ENCODE measurements at regions of chr5 and their contacts with region 1.

Region 1: DNA sequence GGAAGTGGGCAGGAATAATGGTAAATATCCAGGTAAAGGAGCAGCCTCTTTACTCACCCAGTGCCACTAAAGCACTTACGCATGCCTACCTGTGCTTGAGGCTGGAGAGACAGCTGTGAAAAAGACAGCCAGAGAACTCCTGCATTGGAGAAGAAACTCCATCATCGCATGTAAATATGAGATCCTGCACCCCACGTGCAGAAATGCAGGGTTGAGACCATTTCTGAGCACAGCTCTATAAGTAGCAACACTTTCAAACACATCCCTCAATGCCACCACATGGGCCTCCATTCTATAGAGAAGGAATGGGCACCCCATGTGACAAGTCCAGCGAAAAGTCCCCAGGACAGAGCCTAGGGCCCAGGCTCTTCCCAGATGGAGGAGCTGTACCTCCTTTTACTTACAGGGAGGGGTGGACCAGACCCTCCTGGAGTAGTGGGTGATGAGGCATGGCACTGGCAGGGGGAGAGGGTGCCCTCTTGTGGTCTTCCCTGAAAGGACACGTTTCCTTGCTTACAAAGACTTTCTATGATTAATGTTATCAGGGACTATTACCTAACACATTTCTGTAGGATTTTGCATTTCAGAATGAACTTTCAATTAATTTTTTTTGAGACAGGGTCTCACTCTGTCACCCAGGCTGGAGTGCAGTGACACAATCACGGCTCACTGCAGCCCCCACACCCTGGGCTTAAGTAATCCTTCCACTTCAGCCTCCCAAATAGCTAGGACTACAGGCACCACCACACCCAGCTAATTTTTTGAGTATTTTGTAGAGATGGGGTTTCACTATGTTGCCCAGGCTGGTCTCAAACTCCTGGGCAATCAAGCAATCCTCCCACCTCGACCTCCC is 55.3 kb upstream of the IL17B start:
- DNase-seq: peak in 8 of 9 experiments; percentile 17 to 66 (median 50)
- ATAC-seq: no peak
- H3K4me3 ChIP-seq: no peak overlapping the region
- H3K4me3 Mint-ChIP-seq: no peak overlapping the region
- H3K27ac ChIP-seq: no peak overlapping the region
- H3K27ac Mint-ChIP-seq: no peak overlapping the region
- H3K4me1 ChIP-seq: peaks cover 5% of the 10 kb centered on the region
- H3K4me1 Mint-ChIP-seq: peaks cover 7% of the 10 kb centered on the region
- H3K27me3 ChIP-seq: no peaks in the 10 kb centered on the region
- H3K27me3 Mint-ChIP-seq: peaks cover 2% of the 10 kb centered on the region
- CTCF ChIP-seq: peak; percentile 74

Region 2: DNA sequence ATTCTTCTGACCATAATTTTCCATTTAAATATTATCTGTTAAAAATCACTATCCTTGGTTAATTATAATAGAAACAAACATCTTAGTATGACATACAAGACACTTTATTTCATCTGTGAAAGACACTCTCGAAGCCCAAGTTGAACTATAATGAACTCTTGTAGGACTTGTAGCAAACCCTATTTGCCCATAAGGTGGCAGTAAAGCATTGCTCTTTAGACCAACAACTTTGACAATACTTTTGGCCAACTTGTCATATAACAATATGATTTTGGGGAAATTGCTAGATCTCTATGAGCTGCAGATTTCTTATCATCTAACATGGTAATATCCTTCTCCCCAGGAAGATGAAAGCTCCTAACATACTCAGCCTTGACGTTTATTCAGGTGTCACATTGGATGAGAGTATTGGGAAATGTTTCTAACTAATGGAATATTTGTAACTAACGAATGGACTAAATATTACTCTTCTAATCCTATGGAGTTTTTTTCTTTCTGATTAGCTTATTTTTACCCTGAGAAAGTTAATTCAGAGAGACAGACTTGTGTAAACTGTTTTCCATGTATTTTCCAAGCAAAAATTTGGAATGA is 1255.1 kb before region 1 on chr5:
- CTCF ChIA-PET with region 1: no interaction called
- POLR2A ChIA-PET with region 1: no interaction called
- intact Hi-C with region 1: loop called in 1 of 2 experiments (anchors 10 kb)
- DNase-seq: peak in 3 of 9 experiments; percentile 5 to 64 (median 51)
- ATAC-seq: no peak
- H3K4me3 ChIP-seq: no peak overlapping the region
- H3K4me3 Mint-ChIP-seq: no peak overlapping the region
- H3K27ac ChIP-seq: no peak overlapping the region
- H3K27ac Mint-ChIP-seq: no peak overlapping the region
- H3K4me1 ChIP-seq: no peaks in the 10 kb centered on the region
- H3K4me1 Mint-ChIP-seq: no peaks in the 10 kb centered on the region
- H3K27me3 ChIP-seq: no peaks in the 10 kb centered on the region
- H3K27me3 Mint-ChIP-seq: peaks cover 12% of the 10 kb centered on the region
- CTCF ChIP-seq: peak; percentile 62

Region 3: GRCh38 chr5:149317281-149318048 is 116.9 kb before region 1 on chr5:
- CTCF ChIA-PET with region 1: interaction called, 61 read pairs
- POLR2A ChIA-PET with region 1: no interaction called
- intact Hi-C with region 1: loop called in 1 of 2 experiments (anchors 1 kb)
- DNase-seq: peak in 7 of 9 experiments; percentile 14 to 71 (median 38)
- ATAC-seq: peak; percentile 69
- H3K4me3 ChIP-seq: no peak overlapping the region
- H3K4me3 Mint-ChIP-seq: no peak overlapping the region
- H3K27ac ChIP-seq: no peak overlapping the region
- H3K27ac Mint-ChIP-seq: no peak overlapping the region
- H3K4me1 ChIP-seq: no peaks in the 10 kb centered on the region
- H3K4me1 Mint-ChIP-seq: peaks cover 3% of the 10 kb centered on the region
- H3K27me3 ChIP-seq: no peaks in the 10 kb centered on the region
- H3K27me3 Mint-ChIP-seq: no peaks in the 10 kb centered on the region
- CTCF ChIP-seq: peak; percentile 90

Region 4: DNA sequence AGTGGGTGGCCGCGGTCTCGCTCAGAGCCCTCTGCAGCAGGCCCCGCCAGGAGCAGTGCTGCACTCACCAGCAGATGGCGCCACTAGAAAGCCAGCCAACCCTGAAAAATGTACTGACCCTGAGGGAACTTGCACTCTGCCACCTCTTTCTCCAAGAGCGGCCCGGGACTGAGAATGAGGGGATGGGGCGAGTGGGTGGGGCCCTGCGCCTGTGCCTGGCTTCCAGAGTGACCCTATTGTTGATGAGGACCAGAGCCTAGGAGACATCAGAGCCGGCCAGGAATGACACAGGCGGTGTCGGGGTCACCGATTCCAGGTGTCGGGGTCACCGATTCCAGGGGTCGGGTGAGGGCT is 52.4 kb before region 1 on chr5:
- CTCF ChIA-PET with region 1: interaction called, 7 read pairs
- POLR2A ChIA-PET with region 1: no interaction called
- intact Hi-C with region 1: loop called in 1 of 2 experiments (anchors 5 kb)
- DNase-seq: peak; percentile 45 to 82 (median 71)
- ATAC-seq: peak; percentile 61
- H3K4me3 ChIP-seq: no peak overlapping the region
- H3K4me3 Mint-ChIP-seq: no peak overlapping the region
- H3K27ac ChIP-seq: no peak overlapping the region
- H3K27ac Mint-ChIP-seq: no peak overlapping the region
- H3K4me1 ChIP-seq: peaks cover 3% of the 10 kb centered on the region
- H3K4me1 Mint-ChIP-seq: peaks cover 4% of the 10 kb centered on the region
- H3K27me3 ChIP-seq: peaks cover 0 to 2% of the 10 kb centered on the region in 2 experiments
- H3K27me3 Mint-ChIP-seq: peaks cover 2% of the 10 kb centered on the region
- CTCF ChIP-seq: peak; percentile 77

Region 5: GRCh38 chr5:149489605-149490037 is 55.2 kb after region 1 on chr5:
- CTCF ChIA-PET with region 1: no interaction called
- POLR2A ChIA-PET with region 1: no interaction called
- intact Hi-C with region 1: no loop called
- DNase-seq: no peak
- ATAC-seq: no peak
- H3K4me3 ChIP-seq: no peak overlapping the region
- H3K4me3 Mint-ChIP-seq: no peak overlapping the region
- H3K27ac ChIP-seq: no peak overlapping the region
- H3K27ac Mint-ChIP-seq: no peak overlapping the region
- H3K4me1 ChIP-seq: no peaks in the 10 kb centered on the region
- H3K4me1 Mint-ChIP-seq: peaks cover 9% of the 10 kb centered on the region
- H3K27me3 ChIP-seq: no peaks in the 10 kb centered on the region
- H3K27me3 Mint-ChIP-seq: no peaks in the 10 kb centered on the region
- CTCF ChIP-seq: no peak

Region 6: GRCh38 chr5:149544028-149544420 is 109.6 kb after region 1 on chr5:
- CTCF ChIA-PET with region 1: interaction called, 14 read pairs
- POLR2A ChIA-PET with region 1: no interaction called
- intact Hi-C with region 1: no loop called
- DNase-seq: no peak
- ATAC-seq: no peak
- H3K4me3 ChIP-seq: no peak overlapping the region
- H3K4me3 Mint-ChIP-seq: no peak overlapping the region
- H3K27ac ChIP-seq: no peak overlapping the region
- H3K27ac Mint-ChIP-seq: no peak overlapping the region
- H3K4me1 ChIP-seq: peaks cover 53% of the 10 kb centered on the region
- H3K4me1 Mint-ChIP-seq: peaks cover 79% of the 10 kb centered on the region
- H3K27me3 ChIP-seq: no peaks in the 10 kb centered on the region
- H3K27me3 Mint-ChIP-seq: no peaks in the 10 kb centered on the region
- CTCF ChIP-seq: no peak

Region 7: DNA sequence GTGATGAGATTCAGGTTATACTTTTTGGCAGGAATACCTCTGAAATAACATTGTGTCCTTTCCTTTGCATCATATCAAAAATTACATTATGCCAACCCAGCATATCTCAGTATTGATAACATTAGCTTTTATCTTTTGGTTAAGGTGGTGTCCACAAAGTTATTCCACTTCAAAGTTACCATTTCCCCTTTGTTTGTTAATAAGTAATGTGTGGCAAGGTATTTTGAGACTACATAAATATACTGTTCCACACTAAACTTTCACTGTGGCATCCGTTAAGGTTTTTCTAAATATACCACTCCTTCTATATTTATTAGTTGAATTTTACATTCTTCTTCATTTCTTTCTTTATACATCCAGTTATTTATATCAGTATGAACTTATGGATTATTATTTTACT is 132.8 kb after region 1 on chr5:
- CTCF ChIA-PET with region 1: interaction called, 69 read pairs
- POLR2A ChIA-PET with region 1: no interaction called
- intact Hi-C with region 1: loop called (anchors 2 kb)
- DNase-seq: no peak
- ATAC-seq: no peak
- H3K4me3 ChIP-seq: no peak overlapping the region
- H3K4me3 Mint-ChIP-seq: no peak overlapping the region
- H3K27ac ChIP-seq: no peak overlapping the region
- H3K27ac Mint-ChIP-seq: no peak overlapping the region
- H3K4me1 ChIP-seq: no peaks in the 10 kb centered on the region
- H3K4me1 Mint-ChIP-seq: peaks cover 9% of the 10 kb centered on the region
- H3K27me3 ChIP-seq: no peaks in the 10 kb centered on the region
- H3K27me3 Mint-ChIP-seq: no peaks in the 10 kb centered on the region
- CTCF ChIP-seq: no peak